Body of pancreas (tissue), 4 donors: ENCODE measurements at regions of chr22 and their contacts with region 1.

Region 1: GRCh38 chr22:23178512-23179254 is 1.6 kb upstream of the BCR start:
- DNase-seq: peak; percentile 60 to 73 (median 69)
- ATAC-seq: peak; percentile 44
- H3K4me3 ChIP-seq: no peak overlapping the region
- H3K27ac ChIP-seq: peak overlapping the region in 2 of 4 donors; percentile 68 to 80
- H3K4me1 ChIP-seq: peaks cover 44% of the 10 kb centered on the region
- H3K27me3 ChIP-seq: no peaks in the 10 kb centered on the region
- CTCF ChIP-seq: peak; percentile 90 to 96 (median 94)
- POLR2A ChIP-seq: no peak

Region 2: DNA sequence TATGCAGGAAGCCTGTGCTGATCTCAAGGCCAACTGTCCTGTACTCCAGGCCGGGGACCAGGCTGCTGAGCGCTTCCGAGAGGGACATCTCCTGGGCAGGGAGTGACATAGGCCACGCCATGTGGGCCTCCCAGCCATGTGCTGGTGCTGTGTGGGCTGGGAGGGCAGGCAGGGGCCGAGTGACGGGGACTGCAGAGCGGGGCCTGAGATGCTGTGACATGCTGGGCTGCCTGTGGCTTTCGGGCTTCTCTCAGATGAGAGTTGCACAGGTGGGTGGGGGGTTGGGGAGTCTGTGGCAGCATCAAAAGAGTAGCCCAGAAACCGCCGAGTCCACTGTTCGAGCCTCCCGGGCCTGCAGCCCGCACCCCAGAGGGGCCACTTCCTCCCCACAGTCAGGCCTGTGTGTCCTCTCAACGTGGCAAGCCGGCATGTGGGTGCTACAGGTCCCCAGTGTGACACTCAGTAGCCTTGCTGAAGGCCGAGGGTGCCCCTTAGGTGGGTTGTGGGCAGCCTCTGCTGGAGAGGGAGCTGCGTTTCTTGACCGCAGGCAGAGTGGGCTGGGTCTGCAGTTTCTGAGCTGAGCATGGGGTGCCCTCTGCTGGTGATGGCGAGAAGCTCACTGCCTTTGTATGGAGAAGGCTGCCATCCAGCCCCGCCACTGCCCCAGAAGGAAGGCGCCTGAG is 102.9 kb after region 1 on chr22:
- intact Hi-C with region 1: loop called (anchors 5 kb)
- DNase-seq: peak; percentile 84 to 90 (median 86)
- ATAC-seq: peak; percentile 65
- H3K4me3 ChIP-seq: no peak overlapping the region
- H3K27ac ChIP-seq: peak overlapping the region in 3 of 4 donors; percentile 21 to 53 (median 29)
- H3K4me1 ChIP-seq: peaks cover 33% of the 10 kb centered on the region
- H3K27me3 ChIP-seq: no peaks in the 10 kb centered on the region
- CTCF ChIP-seq: peak; percentile 86 to 94 (median 92)
- POLR2A ChIP-seq: no peak

Region 3: GRCh38 chr22:23504516-23504915 is 325.8 kb after region 1 on chr22:
- intact Hi-C with region 1: no loop called
- DNase-seq: no peak
- ATAC-seq: no peak
- H3K4me3 ChIP-seq: no peak overlapping the region
- H3K27ac ChIP-seq: no peak overlapping the region
- H3K4me1 ChIP-seq: no peaks in the 10 kb centered on the region
- H3K27me3 ChIP-seq: no peaks in the 10 kb centered on the region
- CTCF ChIP-seq: no peak
- POLR2A ChIP-seq: no peak

Region 4: GRCh38 chr22:23984430-23984829 is 805.7 kb after region 1 on chr22:
- intact Hi-C with region 1: no loop called
- DNase-seq: peak in 1 of 4 donors; percentile 70
- ATAC-seq: no peak
- H3K4me3 ChIP-seq: no peak overlapping the region
- H3K27ac ChIP-seq: no peak overlapping the region
- H3K4me1 ChIP-seq: no peaks in the 10 kb centered on the region
- H3K27me3 ChIP-seq: no peaks in the 10 kb centered on the region
- CTCF ChIP-seq: peak in 4 of 7 experiments; percentile 14 to 42 (median 30)
- POLR2A ChIP-seq: no peak